MCF 10A (cell line): ENCODE measurements at regions of chr7 and their contacts with region 1.

Region 1: DNA sequence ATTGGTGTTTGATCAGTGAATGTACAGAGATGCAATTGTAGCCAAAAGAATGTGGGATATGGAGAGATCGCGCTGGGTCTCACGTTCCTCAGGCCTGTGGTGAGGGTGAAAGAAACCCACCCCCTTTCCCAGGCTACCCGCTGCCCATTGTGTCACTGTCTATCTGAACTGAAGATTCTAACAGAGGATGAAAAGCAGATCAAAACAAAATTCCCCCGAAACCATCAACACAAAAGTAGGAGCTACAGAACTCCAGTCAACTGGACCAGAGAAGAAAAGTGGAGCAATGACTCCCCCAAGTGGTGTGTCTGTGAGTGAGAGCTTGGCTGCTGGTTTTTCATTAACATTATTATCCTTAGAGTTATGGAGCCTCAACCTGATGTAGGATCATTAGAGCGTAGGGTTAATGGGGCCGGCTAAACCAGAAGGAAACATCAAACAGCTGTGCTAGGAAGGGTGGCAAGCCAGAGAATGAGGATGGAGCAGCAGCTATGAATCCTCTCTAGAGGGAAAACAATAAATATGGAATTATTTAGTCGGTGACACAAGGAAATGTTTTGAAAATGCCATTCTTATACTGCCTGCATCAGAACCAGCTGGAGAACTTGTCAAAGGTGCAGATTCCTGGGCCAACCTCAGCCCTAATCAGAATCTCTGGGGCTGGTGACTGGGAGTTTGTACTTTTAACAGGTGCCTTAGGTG is 38.3 kb downstream of the AKR1B1 start:
- DNase-seq: peak; percentile 88
- H3K4me3 Mint-ChIP-seq: peak overlapping the region; percentile 26
- H3K27ac Mint-ChIP-seq: no peak overlapping the region
- H3K4me1 Mint-ChIP-seq: peaks cover 16% of the 10 kb centered on the region
- H3K27me3 Mint-ChIP-seq: no peaks in the 10 kb centered on the region
- CTCF ChIP-seq: peak; percentile 73

Region 2: DNA sequence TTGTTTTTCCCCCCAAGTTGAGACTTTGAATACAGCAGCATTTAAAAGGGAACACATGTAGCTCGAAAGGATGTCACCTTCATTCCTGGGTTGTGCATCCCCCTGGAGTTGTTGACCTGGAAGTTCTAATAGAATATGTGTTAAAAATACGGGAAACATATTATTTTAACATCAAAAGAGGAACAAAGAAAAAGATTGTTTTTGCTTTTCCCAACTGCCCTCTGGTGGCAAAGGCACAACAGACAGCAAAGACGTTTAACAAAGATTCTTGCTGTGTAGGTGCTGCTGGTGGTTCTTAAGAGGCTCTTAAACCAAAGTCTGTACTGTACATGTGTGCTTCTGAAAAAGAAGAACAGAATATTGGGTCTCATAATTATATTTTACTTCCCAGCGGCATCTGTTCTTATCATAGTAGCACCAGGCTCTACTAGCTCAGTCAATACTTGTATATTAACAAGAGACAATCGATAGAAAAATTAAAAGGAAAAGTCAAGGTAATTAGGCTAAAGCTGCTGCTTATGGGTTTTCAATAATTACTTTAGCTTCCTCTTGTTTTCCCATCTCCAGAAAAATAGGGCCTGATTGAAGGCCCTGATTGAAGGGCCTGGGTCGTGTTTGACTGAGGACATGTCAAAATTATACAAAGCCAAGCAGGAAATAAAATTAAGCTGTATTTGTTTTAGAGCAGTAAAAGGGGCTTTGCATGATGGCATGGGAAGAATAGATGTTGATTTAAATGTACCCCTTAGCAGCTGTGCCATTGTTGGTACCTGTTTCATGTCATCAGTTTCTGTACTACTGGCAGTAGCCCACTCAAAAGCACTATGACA is 677.7 kb before region 1 on chr7:
- CTCF ChIA-PET with region 1: interaction called, 3 read pairs
- POLR2A ChIA-PET with region 1: no interaction called
- intact Hi-C with region 1: loop called (anchors 10 kb)
- DNase-seq: peak; percentile 39
- H3K4me3 Mint-ChIP-seq: no peak overlapping the region
- H3K27ac Mint-ChIP-seq: no peak overlapping the region
- H3K4me1 Mint-ChIP-seq: no peaks in the 10 kb centered on the region
- H3K27me3 Mint-ChIP-seq: no peaks in the 10 kb centered on the region
- CTCF ChIP-seq: peak; percentile 49

Region 3: GRCh38 chr7:133987582-133987981 is 433.0 kb before region 1 on chr7:
- CTCF ChIA-PET with region 1: interaction called, 3 read pairs
- POLR2A ChIA-PET with region 1: no interaction called
- intact Hi-C with region 1: loop called (anchors 1 kb)
- DNase-seq: no peak
- H3K4me3 Mint-ChIP-seq: no peak overlapping the region
- H3K27ac Mint-ChIP-seq: no peak overlapping the region
- H3K4me1 Mint-ChIP-seq: no peaks in the 10 kb centered on the region
- H3K27me3 Mint-ChIP-seq: no peaks in the 10 kb centered on the region
- CTCF ChIP-seq: no peak

Region 4: DNA sequence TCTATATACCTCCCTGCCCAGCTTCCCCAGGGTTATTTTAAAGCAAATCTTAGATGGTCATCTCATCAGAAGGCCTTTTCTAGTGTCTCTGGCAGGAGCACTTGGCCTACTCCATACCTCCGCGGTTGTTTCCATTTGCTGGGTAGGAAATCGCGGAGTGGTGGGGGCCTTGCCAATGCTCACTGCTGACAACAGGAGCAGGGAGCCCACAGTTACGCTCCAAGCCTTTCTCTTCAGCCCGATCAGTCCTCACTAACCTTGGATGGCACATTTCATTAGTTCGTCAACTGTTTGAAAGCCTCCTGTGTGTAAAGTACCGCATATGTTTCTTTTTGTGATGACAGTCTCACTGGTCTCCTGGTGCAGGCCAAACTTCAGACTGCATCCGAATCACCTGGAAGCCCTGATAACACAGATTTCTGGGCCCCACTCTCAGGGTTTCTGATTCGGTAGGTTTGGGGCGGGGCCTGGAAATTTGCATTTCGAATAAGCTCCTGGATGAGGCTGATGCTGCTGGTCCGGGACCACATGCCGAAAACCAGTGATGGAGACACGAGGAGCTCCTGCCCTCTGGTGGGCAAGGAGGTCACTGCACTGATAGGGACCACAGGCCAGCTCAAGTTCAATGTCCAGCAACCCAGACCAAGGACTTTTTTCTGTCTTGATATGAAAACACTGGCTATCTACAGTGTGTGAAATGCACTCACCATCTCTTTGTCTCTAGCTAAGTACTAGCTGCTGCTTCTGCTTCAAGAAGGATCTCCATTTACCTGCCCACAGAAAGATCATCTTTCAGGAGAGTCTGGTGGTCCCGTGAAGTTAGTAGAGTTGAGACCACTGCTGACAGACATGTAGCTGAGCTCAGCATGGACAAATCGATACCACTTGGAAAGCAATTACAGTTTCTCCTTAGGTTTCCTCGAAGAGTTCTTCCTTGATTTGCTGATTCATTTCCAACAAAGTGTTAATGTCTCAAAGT is 279.4 kb before region 1 on chr7:
- CTCF ChIA-PET with region 1: interaction called, 10 read pairs
- POLR2A ChIA-PET with region 1: no interaction called
- intact Hi-C with region 1: loop called (anchors 1 kb)
- DNase-seq: peak; percentile 66
- H3K4me3 Mint-ChIP-seq: no peak overlapping the region
- H3K27ac Mint-ChIP-seq: no peak overlapping the region
- H3K4me1 Mint-ChIP-seq: no peaks in the 10 kb centered on the region
- H3K27me3 Mint-ChIP-seq: no peaks in the 10 kb centered on the region
- CTCF ChIP-seq: peak; percentile 87

Region 5: GRCh38 chr7:134316539-134317344 is 103.8 kb before region 1 on chr7 and contains the start of gene SLC35B4:
- CTCF ChIA-PET with region 1: interaction called, 3 read pairs
- POLR2A ChIA-PET with region 1: no interaction called
- intact Hi-C with region 1: loop called (anchors 2 kb)
- DNase-seq: peak; percentile 97
- H3K4me3 Mint-ChIP-seq: peak within 1 kb of the TSS; percentile 89
- H3K27ac Mint-ChIP-seq: peak within 1 kb of the TSS; percentile 28
- H3K4me1 Mint-ChIP-seq: peaks cover 12% of the 10 kb centered on the region
- H3K27me3 Mint-ChIP-seq: no peaks in the 10 kb centered on the region
- CTCF ChIP-seq: no peak
- total RNA-seq, gene SLC35B4: 18.6 and 24.5 TPM in 2 replicates

Region 6: DNA sequence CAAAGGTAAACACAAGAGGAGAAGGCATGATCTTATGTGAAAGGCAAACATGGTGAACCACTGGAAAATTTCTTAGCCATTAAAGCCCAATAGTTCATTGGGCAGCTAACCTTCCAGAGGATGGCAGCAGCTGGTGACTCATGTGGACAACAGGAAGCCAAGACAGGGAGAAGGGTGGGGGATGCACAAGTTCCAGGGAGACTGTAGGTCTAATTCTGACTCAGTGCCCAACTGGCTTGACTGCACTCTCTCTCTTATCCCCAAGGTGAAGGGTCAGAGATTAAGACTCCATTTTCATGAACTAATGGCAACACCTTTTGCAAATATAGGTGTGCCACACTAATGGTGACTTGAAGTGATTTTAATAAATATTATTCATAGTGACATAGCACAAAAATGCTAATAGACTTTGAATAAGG is 55.9 kb before region 1 on chr7:
- CTCF ChIA-PET with region 1: interaction called, 4 read pairs
- POLR2A ChIA-PET with region 1: no interaction called
- intact Hi-C with region 1: loop called (anchors 2 kb)
- DNase-seq: peak; percentile 92
- H3K4me3 Mint-ChIP-seq: no peak overlapping the region
- H3K27ac Mint-ChIP-seq: peak overlapping the region; percentile 88
- H3K4me1 Mint-ChIP-seq: peaks cover 54% of the 10 kb centered on the region
- H3K27me3 Mint-ChIP-seq: no peaks in the 10 kb centered on the region
- CTCF ChIP-seq: no peak